Activated naive CD4-positive, alpha-beta T cell treated with anti-CD3 and anti-CD28 coated beads, Interleukin-2, amount 10 ng/mL, durations not matched to agents 7 days and 5 days (primary cell): ENCODE measurements at regions of chr6 and their contacts with region 1.

Region 1: DNA sequence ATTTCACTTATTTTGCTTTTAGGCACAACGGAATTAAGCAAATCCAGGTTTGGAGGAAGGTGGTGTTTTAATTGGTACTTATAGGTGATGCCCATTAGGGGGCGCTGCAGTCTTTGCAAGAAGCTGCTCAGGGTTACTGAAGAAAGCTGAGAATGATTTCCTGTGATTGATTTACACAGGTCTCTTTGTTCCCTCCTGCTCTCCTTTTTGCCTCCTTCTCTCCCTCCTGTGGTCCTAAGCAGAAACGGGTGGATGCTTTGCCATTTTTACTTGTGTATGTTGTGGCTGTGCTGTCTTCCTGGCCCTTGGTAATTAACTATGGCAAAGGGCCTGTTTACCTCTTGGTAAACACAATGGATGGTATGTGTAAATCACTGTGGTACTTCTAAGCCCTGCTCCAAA is 97.8 kb downstream of the ANKS1A start:
- DNase-seq: peak; percentile 77
- H3K4me3 Mint-ChIP-seq: no peak overlapping the region
- H3K27ac Mint-ChIP-seq: no peak overlapping the region
- H3K4me1 Mint-ChIP-seq: no peaks in the 10 kb centered on the region
- H3K27me3 Mint-ChIP-seq: no peaks in the 10 kb centered on the region

Region 2: GRCh38 chr6:34976239-34976638 is 10.6 kb before region 1 on chr6:
- CTCF ChIA-PET with region 1: interaction called, 12 read pairs
- DNase-seq: no peak
- H3K4me3 Mint-ChIP-seq: no peak overlapping the region
- H3K27ac Mint-ChIP-seq: no peak overlapping the region
- H3K4me1 Mint-ChIP-seq: no peaks in the 10 kb centered on the region
- H3K27me3 Mint-ChIP-seq: no peaks in the 10 kb centered on the region

Region 3: DNA sequence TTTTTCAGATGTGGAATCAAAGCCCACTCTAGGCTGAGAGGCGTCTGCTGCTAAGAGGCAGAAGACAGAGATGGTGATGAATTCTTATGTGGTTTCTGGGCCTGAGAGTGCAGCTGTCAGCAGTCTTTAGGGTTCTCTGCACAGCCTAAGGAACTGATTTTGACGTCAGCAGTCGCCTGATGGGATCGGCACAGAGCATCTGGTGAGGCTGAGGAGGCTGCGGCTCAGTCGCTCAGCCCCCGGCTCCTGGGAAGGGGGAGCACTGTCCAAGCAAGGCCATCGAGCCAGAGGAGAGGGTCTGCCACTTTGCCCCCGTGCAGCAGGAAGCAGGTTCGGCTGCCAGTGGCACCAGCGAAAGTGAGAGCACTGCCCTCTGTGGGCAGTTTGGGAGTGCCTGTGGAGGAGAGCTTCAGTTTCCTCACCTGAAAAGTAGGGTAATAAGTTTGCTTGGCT is 61.8 kb after region 1 on chr6:
- CTCF ChIA-PET with region 1: interaction called, 10 read pairs
- DNase-seq: peak; percentile 56
- H3K4me3 Mint-ChIP-seq: no peak overlapping the region
- H3K27ac Mint-ChIP-seq: no peak overlapping the region
- H3K4me1 Mint-ChIP-seq: no peaks in the 10 kb centered on the region
- H3K27me3 Mint-ChIP-seq: peaks cover 4% of the 10 kb centered on the region

Region 4: DNA sequence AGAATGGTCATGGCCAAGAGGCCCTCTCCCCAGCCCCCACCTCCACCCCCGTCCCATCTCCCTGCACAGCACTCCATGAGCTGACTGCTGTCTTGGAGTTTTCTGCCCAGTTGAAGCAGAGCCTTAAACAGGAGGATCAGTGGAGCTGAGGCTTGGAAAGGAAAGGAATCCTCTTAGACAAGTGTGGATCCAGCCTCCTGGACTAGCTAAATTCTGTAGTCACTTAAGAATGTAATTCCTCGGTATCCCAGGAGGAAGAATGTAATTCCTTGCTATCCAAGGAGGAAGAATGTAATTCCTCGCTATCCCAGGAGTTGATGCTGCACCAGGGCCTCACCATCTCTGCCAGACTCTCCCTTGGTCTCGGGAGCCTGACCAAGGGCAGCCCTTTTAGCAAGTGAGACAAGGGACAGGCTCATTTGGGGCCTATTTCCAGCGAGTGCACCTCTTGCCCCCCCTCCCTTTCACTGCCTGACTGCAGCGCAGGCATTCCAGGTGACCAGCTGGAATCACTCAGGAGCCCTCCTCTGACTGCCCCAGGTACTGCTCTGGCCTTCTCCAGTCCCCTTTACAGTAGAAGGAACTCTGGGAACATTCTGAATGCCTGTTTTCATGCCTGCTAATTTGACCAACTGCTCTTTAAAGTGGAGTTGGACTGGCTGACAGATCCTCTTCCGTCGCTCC is 78.1 kb after region 1 on chr6:
- CTCF ChIA-PET with region 1: no interaction called
- DNase-seq: no peak
- H3K4me3 Mint-ChIP-seq: no peak overlapping the region
- H3K27ac Mint-ChIP-seq: no peak overlapping the region
- H3K4me1 Mint-ChIP-seq: peaks cover 14% of the 10 kb centered on the region
- H3K27me3 Mint-ChIP-seq: no peaks in the 10 kb centered on the region

Region 5: DNA sequence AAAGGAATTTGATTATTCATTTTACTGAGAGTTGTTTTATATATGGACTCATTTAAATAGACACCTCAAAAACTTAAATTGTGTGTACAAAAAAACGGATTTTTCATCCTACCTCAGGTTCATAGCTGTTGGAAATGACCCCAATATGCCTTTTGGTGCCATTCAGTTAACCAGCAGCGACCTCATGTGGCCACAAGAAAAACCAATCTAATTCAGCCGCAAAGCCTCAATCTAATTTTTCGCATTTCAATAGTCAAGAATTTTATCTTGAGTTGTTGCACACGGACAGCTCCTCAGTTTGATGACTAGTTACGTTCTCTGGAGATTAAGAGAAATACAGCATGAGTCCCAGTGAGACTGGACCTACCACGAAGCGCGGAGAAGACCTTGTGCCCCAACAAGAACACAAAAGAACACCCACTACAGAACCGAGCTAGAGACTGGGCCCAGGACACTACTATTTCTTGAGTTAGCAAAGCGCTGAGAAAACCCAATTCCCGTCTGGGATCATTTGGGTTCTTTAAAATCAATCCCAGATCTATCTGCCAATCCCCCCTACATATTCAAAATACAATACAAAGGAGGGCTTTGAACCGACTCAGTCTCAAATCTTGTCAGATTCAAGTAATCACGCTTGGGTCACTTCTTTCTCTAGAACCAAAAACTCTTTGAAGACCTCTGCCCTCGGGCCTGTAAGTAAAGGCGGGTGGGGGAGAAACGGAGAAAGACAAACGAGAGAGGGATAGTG is 153.2 kb after region 1 on chr6:
- CTCF ChIA-PET with region 1: interaction called, 56 read pairs
- DNase-seq: peak; percentile 69
- H3K4me3 Mint-ChIP-seq: no peak overlapping the region
- H3K27ac Mint-ChIP-seq: no peak overlapping the region
- H3K4me1 Mint-ChIP-seq: peaks cover 22% of the 10 kb centered on the region
- H3K27me3 Mint-ChIP-seq: peaks cover 27% of the 10 kb centered on the region

Region 6: DNA sequence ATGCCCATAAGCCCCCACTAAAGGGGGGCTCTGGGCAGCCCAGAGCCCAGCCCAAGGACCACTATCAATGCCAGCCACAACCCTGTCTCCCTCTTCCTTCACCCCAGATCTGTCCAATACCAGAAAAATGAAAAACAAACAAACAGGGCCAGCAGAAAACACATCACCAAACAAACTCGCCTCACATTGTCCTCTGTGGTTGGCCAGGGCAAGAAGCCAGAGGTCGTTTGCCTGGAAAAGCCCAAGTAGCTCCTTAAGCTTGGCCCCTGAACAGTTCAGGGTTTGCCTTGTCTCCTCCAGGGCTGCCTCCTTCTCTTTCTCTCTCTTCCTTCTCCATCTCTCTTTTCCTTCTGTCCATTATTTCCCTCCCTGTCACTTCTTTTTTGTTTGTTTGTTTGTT is 216.8 kb after region 1 on chr6:
- CTCF ChIA-PET with region 1: interaction called, 53 read pairs
- DNase-seq: no peak
- H3K4me3 Mint-ChIP-seq: no peak overlapping the region
- H3K27ac Mint-ChIP-seq: no peak overlapping the region
- H3K4me1 Mint-ChIP-seq: no peaks in the 10 kb centered on the region
- H3K27me3 Mint-ChIP-seq: peaks cover 78% of the 10 kb centered on the region

Region 7: DNA sequence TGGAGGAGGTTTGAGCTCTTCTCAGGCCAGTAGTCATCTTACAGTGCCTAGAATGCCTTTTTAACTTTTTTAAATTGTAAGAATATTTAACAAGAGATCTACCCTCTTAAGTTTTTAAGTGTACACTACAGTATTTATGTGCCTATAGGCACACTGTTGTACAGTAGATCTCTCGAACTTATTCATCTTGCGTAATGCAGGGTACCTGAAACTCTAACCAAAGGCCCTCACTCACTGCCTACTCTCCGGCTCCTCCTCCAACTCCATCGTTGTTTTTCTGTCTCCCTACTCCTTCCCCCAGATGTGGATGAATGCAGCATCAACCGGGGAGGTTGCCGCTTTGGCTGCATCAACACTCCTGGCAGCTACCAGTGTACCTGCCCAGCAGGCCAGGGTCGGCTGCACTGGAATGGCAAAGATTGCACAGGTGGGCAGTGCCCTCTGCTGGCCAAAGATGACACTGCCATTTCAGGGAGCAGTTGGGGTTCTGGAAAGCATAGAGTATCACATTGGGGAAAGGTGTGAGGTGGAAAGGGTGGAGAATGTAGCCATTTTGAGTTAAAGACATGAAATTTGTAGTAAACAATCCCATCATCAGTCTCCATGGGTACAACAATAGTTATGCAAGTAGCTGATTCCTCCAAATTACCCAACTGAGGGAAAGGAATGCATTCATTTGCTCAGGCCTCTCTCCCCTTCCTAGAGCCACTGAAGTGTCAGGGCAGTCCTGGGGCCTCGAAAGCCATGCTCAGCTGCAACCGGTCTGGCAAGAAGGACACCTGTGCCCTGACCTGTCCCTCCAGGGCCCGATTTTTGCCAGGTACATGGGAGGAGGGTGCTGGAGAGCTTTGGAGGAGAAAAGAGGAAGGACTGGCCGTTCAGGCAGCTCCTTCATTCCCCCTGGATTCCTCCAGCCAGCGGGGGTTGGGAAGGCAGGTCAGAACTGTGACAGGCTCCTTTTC is 254.3 kb after region 1 on chr6:
- CTCF ChIA-PET with region 1: interaction called, 41 read pairs
- DNase-seq: peak; percentile 84
- H3K4me3 Mint-ChIP-seq: no peak overlapping the region
- H3K27ac Mint-ChIP-seq: no peak overlapping the region
- H3K4me1 Mint-ChIP-seq: no peaks in the 10 kb centered on the region
- H3K27me3 Mint-ChIP-seq: peaks cover 4% of the 10 kb centered on the region